ENCODE measurements at regions of chr11 and their contacts with region 1.

Region 1: GRCh38 chr11:86990515-86990914 is 35.3 kb upstream of the FZD4 start:
- DNase-seq: peak; percentile 39
- H3K4me3 ChIP-seq: no peak overlapping the region
- H3K27me3 ChIP-seq: no peaks in the 10 kb centered on the region
- CTCF ChIP-seq: no peak

Region 2: GRCh38 chr11:86202013-86202336 is 788.5 kb before region 1 on chr11:
- CTCF ChIA-PET with region 1: no interaction called
- POLR2A ChIA-PET with region 1: no interaction called
- DNase-seq: no peak
- H3K4me3 ChIP-seq: no peak overlapping the region
- H3K27me3 ChIP-seq: no peaks in the 10 kb centered on the region
- CTCF ChIP-seq: no peak

Region 3: DNA sequence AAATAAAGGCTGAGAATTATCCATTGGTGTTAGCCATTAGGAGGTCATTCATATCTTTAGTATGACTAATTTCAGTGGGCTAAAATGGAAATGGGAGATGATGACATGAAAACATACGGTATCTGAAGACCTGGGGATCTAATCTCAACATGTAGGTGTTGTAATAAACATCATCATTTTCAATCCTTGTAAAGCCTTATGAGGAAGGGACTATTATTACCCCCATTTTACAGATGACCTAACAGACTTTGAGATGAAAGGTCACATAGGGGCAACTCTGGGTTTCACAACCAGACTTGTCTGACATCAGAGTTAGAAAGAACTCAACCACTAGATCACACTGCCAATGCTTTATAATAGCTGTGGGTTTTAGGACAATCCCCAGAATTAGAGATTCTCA is 12.4 kb after region 1 on chr11:
- CTCF ChIA-PET with region 1: interaction called, 11 read pairs
- POLR2A ChIA-PET with region 1: interaction called, 4 read pairs
- DNase-seq: no peak
- H3K4me3 ChIP-seq: no peak overlapping the region
- H3K27me3 ChIP-seq: no peaks in the 10 kb centered on the region; the same call in 1 of the 2 replicates
- CTCF ChIP-seq: no peak

Measured in BJ (cell line).